PC-9 (cell line): ENCODE measurements at regions of chr11 and their contacts with region 1.

Region 1: DNA sequence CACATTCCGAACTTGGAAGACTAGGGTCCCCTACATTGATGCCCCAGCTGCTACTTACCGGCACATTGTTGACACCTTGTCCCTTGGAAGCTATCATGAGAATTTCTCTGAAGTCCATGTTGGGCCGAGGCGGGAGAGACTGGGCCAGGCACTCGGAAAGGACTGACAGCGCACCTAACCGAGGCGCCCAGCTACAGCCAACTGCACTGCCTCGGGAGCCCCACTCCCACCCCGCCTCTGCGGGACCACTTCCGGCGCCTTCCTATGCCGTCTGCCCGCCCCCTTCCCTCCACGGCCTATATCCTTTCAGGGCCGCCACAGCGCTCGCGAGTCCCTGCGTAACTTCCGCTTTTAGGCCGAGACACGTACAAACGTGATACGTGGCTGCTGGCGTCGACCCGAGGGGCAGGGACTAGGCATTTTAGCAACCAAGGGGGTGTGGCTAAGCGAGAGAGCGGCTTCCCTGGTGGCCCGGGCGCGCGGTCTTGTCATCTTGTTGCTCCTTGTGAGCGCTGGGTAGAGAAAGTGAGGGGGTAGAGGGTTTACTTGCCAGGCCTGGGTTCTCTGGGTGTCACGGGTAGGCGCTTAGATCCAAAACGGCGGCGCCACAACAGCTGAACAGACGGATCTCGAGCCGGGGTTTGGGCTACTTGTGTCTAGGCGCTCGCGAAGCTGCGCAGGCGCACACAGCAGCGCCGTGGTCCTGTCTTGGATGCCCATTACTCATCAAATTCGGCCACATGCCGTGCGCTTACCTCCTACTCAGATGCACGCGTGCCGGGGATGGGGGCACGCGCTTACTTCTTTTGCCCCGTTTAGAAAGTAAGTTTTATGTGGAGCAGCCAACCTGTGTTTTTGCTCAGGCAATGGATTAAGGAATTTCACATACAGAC is at the start of gene SPTY2D1:
- DNase-seq: peak; percentile 98
- H3K4me3 ChIP-seq: peak within 1 kb of the TSS; percentile 95
- H3K27ac ChIP-seq: peak within 1 kb of the TSS; percentile 83
- H3K4me1 ChIP-seq: peaks cover 15% of the 10 kb centered on the region
- H3K27me3 ChIP-seq: no peaks in the 10 kb centered on the region
- CTCF ChIP-seq: no peak
- total RNA-seq, gene SPTY2D1: 22.3 and 23.7 TPM in 2 replicates

Region 2: GRCh38 chr11:18171377-18172000 is 462.9 kb before region 1 on chr11:
- CTCF ChIA-PET with region 1: no interaction called
- POLR2A ChIA-PET with region 1: no interaction called
- intact Hi-C with region 1: no loop called
- DNase-seq: peak in 1 of 2 experiments; percentile 45
- H3K4me3 ChIP-seq: no peak overlapping the region
- H3K27ac ChIP-seq: no peak overlapping the region
- H3K4me1 ChIP-seq: no peaks in the 10 kb centered on the region
- H3K27me3 ChIP-seq: peaks cover 15% of the 10 kb centered on the region
- CTCF ChIP-seq: peak; percentile 88

Region 3: DNA sequence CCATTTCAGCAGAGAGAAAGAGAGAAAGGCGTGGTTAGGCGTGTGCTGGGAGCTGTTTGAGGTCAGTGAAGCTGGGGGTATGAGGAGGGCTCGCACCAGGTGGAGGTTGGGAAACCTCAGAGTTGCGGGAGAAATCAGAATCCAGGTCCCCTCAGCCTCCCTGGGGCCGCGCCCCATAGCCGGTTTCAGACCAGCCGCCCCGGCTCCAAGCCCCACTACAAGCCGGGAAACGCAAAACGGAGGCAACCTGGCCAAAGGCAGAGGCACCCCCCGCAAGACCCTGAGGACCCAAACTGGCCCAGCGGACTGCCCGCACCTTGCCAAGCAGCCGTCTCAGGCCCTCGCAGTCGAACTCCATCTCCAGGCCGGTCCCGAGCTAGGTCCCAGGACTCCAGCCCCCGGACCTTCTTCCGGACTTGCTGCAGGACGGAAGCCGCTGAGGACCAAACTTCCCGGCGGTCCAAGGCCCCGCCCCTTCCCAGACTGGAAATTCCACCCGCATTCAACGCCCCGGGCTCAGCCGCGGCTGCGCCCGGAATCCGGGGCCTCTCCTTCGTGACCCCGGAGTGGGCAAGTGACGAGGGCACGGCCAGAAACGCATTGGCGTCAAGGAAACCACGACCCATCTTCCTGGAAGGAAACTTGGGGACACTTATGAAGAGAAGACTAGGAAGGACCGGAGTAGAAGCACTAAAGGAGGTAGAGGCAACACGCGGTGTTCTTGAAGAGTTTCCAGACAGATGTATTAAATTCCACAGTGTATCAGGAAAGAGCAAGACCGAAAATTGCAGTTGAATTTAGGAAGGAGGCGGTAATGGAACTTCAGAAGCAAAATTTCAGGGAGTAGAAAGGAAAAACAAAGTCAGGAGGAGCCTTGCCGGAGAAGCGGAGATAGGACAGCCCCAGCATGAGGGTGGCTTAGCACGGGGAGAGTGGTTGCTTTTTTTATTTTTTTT is 45.8 kb before region 1 on chr11 and contains the start of gene UEVLD:
- CTCF ChIA-PET with region 1: no interaction called
- POLR2A ChIA-PET with region 1: no interaction called
- intact Hi-C with region 1: loop called (anchors 1 kb)
- DNase-seq: peak; percentile 82 to 93
- H3K4me3 ChIP-seq: peak within 1 kb of the TSS; percentile 70
- H3K27ac ChIP-seq: peak within 1 kb of the TSS; percentile 36
- H3K4me1 ChIP-seq: peaks cover 24% of the 10 kb centered on the region
- H3K27me3 ChIP-seq: no peaks in the 10 kb centered on the region
- CTCF ChIP-seq: no peak
- total RNA-seq, gene UEVLD: 20.2 and 31.6 TPM in 2 replicates

Region 4: DNA sequence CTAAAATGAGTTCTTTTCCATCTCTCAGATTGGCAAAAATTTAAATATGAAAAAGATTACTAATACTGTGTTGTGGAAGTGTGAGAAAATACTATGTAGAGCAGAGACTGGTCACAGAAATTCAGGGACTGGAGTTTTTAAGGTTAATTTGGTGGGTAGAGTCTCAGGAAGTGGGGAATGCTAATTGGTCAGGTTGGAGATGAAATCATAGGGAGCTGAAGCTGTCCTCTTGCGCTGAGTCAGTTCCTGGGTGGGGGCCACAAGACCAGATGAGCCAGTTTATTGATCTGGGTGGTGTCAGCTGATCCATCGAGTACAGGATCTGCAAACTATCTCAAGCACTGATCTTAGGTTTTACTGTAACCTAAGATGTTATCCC is 34.8 kb after region 1 on chr11:
- CTCF ChIA-PET with region 1: no interaction called
- POLR2A ChIA-PET with region 1: interaction called, 3 read pairs
- intact Hi-C with region 1: loop called (anchors 2 kb)
- DNase-seq: peak; percentile 24 to 93
- H3K4me3 ChIP-seq: peak overlapping the region; percentile 43; the same call in 1 of the 2 replicates
- H3K27ac ChIP-seq: peak overlapping the region; percentile 85
- H3K4me1 ChIP-seq: peaks cover 59% of the 10 kb centered on the region
- H3K27me3 ChIP-seq: no peaks in the 10 kb centered on the region
- CTCF ChIP-seq: no peak